AG04449 (cell line): ENCODE measurements at regions of chr3 and their contacts with region 1.

Region 1: DNA sequence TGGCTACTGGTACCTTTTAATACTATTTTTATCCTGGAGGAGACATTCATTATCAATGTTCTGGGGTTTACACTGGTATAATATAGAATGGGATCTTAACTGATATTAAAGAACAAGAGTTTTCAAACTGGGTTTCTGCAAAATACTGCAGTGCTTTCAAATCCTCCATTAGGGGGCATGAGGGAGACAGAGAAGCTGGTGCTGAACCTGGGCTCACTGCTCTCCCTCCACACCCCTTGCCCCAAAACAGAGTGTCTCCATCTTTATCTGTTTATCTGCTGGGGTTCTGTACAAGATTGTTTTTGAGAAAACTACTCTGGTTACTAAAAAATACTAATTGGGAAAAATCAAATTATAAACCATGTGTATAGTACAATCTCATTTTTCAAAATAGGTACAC is 41.7 kb downstream of the CADPS start:
- DNase-seq: no peak
- H3K4me3 ChIP-seq: no peak overlapping the region
- CTCF ChIP-seq: peak; percentile 34

Region 2: GRCh38 chr3:63193629-63194028 is 360.1 kb after region 1 on chr3:
- CTCF ChIA-PET with region 1: interaction called, 51 read pairs
- POLR2A ChIA-PET with region 1: no interaction called
- DNase-seq: no peak
- H3K4me3 ChIP-seq: no peak overlapping the region
- CTCF ChIP-seq: peak; percentile 37